Activated B cell treated with CpG ODN at 0.5 μM for 24 hours (primary cell): ENCODE measurements at regions of chr14 and their contacts with region 1.

Region 1: GRCh38 chr14:55051426-55052268 is at the start of gene MAPK1IP1L:
- DNase-seq: peak; percentile 97
- ATAC-seq: peak; percentile 94
- H3K4me3 Mint-ChIP-seq: peak within 1 kb of the TSS; percentile 94
- H3K27ac Mint-ChIP-seq: peak within 1 kb of the TSS; percentile 95
- H3K4me1 Mint-ChIP-seq: peaks cover 39% of the 10 kb centered on the region
- H3K27me3 Mint-ChIP-seq: no peaks in the 10 kb centered on the region
- CTCF ChIP-seq: peak; percentile 75
- total RNA-seq, gene MAPK1IP1L: 119 and 130 TPM in 2 replicates

Region 2: GRCh38 chr14:54488646-54489317 is 562.9 kb before region 1 on chr14 and contains the start of gene GMFB:
- CTCF ChIA-PET with region 1: no interaction called
- POLR2A ChIA-PET with region 1: no interaction called
- intact Hi-C with region 1: loop called (anchors 5 kb)
- DNase-seq: peak; percentile 80
- ATAC-seq: peak; percentile 96
- H3K4me3 Mint-ChIP-seq: peak within 1 kb of the TSS; percentile 94
- H3K27ac Mint-ChIP-seq: peak within 1 kb of the TSS; percentile 94
- H3K4me1 Mint-ChIP-seq: peaks cover 66% of the 10 kb centered on the region
- H3K27me3 Mint-ChIP-seq: no peaks in the 10 kb centered on the region
- CTCF ChIP-seq: no peak
- total RNA-seq, gene GMFB: 39.5 and 43.0 TPM in 2 replicates

Region 3: DNA sequence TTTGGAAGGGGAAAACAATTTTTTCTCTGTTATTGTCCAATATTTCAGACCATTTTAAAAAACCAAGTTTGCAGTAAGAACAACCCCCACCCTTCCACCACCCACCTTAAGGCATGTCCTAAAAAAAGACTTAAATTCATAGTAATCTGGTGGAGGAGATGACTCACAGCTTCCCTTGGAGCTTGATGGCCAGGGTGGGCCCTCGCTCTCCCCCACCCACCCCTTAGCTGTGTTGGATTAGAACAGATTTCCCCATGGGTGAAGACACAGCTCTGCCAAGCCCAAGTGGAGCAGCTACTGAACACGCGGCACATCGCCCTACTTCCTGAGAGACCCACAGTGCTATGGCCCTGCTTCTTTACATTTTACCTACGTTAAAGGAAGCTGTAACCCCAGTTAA is 289.4 kb before region 1 on chr14:
- CTCF ChIA-PET with region 1: no interaction called
- POLR2A ChIA-PET with region 1: no interaction called
- intact Hi-C with region 1: no loop called
- DNase-seq: no peak
- ATAC-seq: no peak
- H3K4me3 Mint-ChIP-seq: no peak overlapping the region
- H3K27ac Mint-ChIP-seq: no peak overlapping the region
- H3K4me1 Mint-ChIP-seq: no peaks in the 10 kb centered on the region
- H3K27me3 Mint-ChIP-seq: no peaks in the 10 kb centered on the region
- CTCF ChIP-seq: no peak

Region 4: GRCh38 chr14:55062517-55063351 is 11.1 kb after region 1 on chr14:
- CTCF ChIA-PET with region 1: interaction called, 8 read pairs
- POLR2A ChIA-PET with region 1: interaction called, 33 read pairs
- intact Hi-C with region 1: no loop called
- DNase-seq: no peak
- ATAC-seq: no peak
- H3K4me3 Mint-ChIP-seq: no peak overlapping the region
- H3K27ac Mint-ChIP-seq: no peak overlapping the region
- H3K4me1 Mint-ChIP-seq: peaks cover 53% of the 10 kb centered on the region
- H3K27me3 Mint-ChIP-seq: no peaks in the 10 kb centered on the region
- CTCF ChIP-seq: no peak

Region 5: GRCh38 chr14:55088356-55088755 is 36.7 kb after region 1 on chr14:
- CTCF ChIA-PET with region 1: interaction called, 16 read pairs
- POLR2A ChIA-PET with region 1: interaction called, 9 read pairs
- intact Hi-C with region 1: loop called (anchors 1 kb)
- DNase-seq: no peak
- ATAC-seq: no peak
- H3K4me3 Mint-ChIP-seq: no peak overlapping the region
- H3K27ac Mint-ChIP-seq: no peak overlapping the region
- H3K4me1 Mint-ChIP-seq: peaks cover 9% of the 10 kb centered on the region
- H3K27me3 Mint-ChIP-seq: no peaks in the 10 kb centered on the region
- CTCF ChIP-seq: no peak

Region 6: DNA sequence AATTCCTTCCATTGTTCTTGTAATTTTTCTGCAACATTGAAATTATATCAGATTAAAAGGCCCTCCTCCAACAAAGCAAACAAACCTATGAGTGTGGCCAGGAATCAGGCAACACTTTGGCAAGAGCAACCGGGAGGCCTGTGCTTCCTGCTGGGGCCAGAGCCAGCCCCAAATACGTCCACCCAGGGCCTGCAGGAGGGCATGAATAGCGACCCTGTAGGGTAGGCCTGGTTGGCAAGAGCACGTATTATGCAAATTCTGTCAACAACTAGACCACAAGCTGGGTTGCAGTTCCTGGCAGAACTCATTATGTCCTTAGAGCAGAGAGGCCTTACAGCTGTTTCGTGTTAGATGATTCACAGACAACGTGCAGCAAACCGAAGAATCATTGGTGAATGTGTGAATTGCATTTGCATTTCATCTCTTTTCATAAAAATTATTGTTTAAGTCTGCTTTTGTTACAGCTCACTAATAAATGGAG is 50.5 kb after region 1 on chr14:
- CTCF ChIA-PET with region 1: interaction called, 5 read pairs
- POLR2A ChIA-PET with region 1: interaction called, 13 read pairs
- intact Hi-C with region 1: loop called (anchors 1 kb)
- DNase-seq: peak; percentile 37
- ATAC-seq: peak; percentile 77
- H3K4me3 Mint-ChIP-seq: peak overlapping the region; percentile 61
- H3K27ac Mint-ChIP-seq: peak overlapping the region; percentile 87
- H3K4me1 Mint-ChIP-seq: peaks cover 55% of the 10 kb centered on the region
- H3K27me3 Mint-ChIP-seq: no peaks in the 10 kb centered on the region
- CTCF ChIP-seq: no peak